ENCODE measurements at regions of chr14 and their contacts with region 1.

Region 1: GRCh38 chr14:105075379-105076295 is 10.4 kb upstream of the GPR132 start:
- DNase-seq: no peak
- H3K4me3 ChIP-seq: peak overlapping the region in 1 of 4 experiments; percentile 30; a peak in 2 of 8 replicates
- H3K27ac ChIP-seq: no peak overlapping the region
- H3K4me1 ChIP-seq: peaks cover 0 to 14% (median 5%) of the 10 kb centered on the region in 4 experiments; a peak in 6 of 7 replicates
- H3K27me3 ChIP-seq: no peaks in the 10 kb centered on the region
- CTCF ChIP-seq: no peak
- EP300 ChIP-seq: no peak
- POLR2A ChIP-seq: no peak
- RAD21 ChIP-seq: no peak

Region 2: GRCh38 chr14:105061428-105062047 is 14.1 kb before region 1 on chr14:
- CTCF ChIA-PET with region 1: interaction called, 16 read pairs
- POLR2A ChIA-PET with region 1: interaction called, 4 read pairs
- DNase-seq: no peak
- H3K4me3 ChIP-seq: no peak overlapping the region
- H3K27ac ChIP-seq: no peak overlapping the region
- H3K4me1 ChIP-seq: peaks cover 0 to 9% (median 6%) of the 10 kb centered on the region in 4 experiments; a peak in 4 of 7 replicates
- H3K27me3 ChIP-seq: peaks cover 0 to 8% (median 5%) of the 10 kb centered on the region in 4 experiments; a peak in 4 of 7 replicates
- CTCF ChIP-seq: no peak
- EP300 ChIP-seq: no peak
- POLR2A ChIP-seq: no peak
- RAD21 ChIP-seq: no peak

Region 3: DNA sequence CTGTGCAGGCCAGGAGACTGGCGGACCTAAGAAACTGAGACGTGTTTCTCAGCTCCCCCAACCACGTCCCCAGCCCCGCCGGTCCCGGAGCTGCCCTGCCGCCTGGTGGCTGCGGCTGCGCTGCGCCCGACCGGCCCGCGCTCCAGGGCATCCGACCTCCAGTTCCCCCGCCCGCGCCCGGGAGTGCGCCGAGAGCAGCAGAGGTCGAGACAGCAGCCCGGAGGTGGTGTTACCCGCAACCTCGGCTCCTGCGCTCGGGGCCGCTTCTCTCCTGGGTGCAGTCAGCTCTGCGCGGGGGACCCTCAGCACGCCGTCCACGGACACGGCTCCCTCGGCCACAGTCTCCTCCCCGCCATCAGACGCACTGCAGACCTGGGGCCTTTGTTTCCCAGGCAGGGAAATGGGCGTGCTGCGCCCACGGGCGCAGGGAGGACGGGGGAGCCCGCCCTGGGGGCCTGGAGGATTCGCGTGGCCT is 11.2 kb after region 1 on chr14:
- CTCF ChIA-PET with region 1: interaction called, 16 read pairs
- POLR2A ChIA-PET with region 1: interaction called, 9 read pairs
- DNase-seq: peak; percentile 56 to 89
- H3K4me3 ChIP-seq: peak overlapping the region; percentile 36 to 72 (median 50)
- H3K27ac ChIP-seq: no peak overlapping the region
- H3K4me1 ChIP-seq: peaks cover 0 to 10% (median 5%) of the 10 kb centered on the region in 4 experiments; a peak in 3 of 7 replicates
- H3K27me3 ChIP-seq: peaks cover 12 to 44% (median 34%) of the 10 kb centered on the region in 4 experiments
- CTCF ChIP-seq: peak in 2 of 3 experiments; percentile 79 to 93; a peak in 3 of 4 replicates
- EP300 ChIP-seq: peak in 1 of 2 experiments; percentile 41; a peak in 1 of 3 replicates
- POLR2A ChIP-seq: no peak
- RAD21 ChIP-seq: peak; percentile 72 to 82

Measured in H1 (cell line).